ENCODE measurements at regions of chr10 and their contacts with region 1.

Region 1: DNA sequence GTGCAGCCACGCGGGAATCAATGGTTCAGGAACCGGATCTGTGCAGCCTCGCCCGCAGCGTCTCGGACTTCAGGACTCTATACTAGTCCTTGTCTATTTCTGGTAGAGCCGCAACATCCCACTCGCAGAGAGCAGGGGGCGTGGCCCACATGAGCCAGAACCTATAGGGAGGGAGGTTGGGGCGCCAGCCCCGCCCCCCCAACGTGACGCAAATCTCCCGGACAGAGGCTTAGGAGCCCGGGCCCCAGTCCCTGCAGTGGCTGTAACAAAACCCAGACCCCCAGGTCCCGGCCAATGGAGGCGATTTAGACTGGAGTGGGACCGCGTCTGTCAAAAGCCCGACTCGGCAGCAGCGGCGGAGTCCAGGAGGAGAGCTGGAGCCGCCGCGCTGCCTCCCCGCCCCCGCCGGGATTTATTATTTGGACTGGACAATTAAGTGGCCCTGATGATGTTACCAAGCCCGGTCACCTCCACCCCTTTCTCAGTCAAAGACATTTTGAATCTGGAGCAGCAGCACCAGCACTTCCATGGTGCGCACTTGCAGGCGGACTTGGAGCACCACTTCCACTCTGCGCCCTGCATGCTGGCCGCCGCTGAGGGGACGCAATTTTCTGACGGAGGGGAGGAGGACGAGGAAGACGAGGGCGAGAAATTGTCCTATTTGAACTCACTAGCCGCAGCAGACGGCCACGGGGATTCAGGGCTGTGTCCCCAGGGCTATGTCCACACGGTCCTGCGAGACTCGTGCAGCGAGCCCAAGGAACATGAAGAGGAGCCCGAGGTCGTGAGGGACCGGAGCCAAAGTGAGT is at the start of gene NKX2-3:
- DNase-seq: peak; percentile 85 to 94
- ATAC-seq: peak; percentile 60
- total RNA-seq, gene NKX2-3: 3.4 to 11.7 TPM

Region 2: DNA sequence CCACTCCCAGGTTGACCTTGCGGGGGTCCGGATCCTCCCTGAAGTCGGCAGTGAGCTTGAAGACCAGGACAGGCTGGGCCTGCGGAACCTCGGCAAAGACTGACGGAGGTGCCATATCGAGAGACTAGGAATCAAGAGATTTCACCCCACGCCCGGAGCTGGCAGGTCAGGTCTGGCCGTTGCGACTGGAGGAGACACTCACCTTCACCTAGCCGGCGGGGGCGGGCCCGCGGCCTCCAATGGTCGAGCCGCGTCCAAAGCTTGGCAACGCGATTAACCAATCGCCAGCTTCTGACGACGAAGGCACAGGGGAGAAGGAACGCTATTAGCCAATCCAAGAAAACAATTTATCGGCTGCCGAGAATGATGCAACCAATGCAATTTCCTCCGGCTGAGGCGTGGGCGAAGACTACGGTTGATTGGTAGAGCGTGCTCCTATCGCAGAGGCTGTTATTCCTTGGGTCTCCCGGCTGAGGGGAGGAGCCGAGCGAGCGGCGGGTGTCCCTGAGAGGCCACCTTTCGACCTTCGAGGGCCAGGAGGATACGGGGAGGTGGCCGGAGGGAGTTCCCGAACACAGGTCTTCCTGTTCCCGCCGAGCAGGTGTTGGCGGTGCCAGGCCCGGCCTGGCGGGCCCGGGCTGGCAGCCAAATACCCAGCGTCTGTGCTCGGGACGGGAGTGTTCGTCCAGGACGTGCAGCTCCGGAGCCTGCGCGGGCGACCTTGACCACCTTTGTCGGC is 102.3 kb before region 1 on chr10 and contains the start of gene GOT1:
- intact Hi-C with region 1: loop called (anchors 5 to 10 kb)
- DNase-seq: peak; percentile 95 to 99
- ATAC-seq: peak; percentile 92
- total RNA-seq, gene GOT1: 91.5 to 107 TPM

Region 3: GRCh38 chr10:99435986-99436638 is 96.8 kb before region 1 on chr10:
- intact Hi-C with region 1: loop called (anchors 5 to 10 kb)
- DNase-seq: no peak
- ATAC-seq: no peak